Activated T-helper 1 cell treated with anti-CD3 and anti-CD28 coated beads, Interleukin-12 subunit alpha, Interleukin-12 subunit beta, Interleukin-2, Interleukin-4 antibody, amounts not matched to agents 30 ng/mL and 10 ng/mL and 1 ng/mL, durations not matched to agents 14 hours and 24 hours and 36 hours (primary cell): ENCODE measurements at regions of chr6 and their contacts with region 1.

Region 1: DNA sequence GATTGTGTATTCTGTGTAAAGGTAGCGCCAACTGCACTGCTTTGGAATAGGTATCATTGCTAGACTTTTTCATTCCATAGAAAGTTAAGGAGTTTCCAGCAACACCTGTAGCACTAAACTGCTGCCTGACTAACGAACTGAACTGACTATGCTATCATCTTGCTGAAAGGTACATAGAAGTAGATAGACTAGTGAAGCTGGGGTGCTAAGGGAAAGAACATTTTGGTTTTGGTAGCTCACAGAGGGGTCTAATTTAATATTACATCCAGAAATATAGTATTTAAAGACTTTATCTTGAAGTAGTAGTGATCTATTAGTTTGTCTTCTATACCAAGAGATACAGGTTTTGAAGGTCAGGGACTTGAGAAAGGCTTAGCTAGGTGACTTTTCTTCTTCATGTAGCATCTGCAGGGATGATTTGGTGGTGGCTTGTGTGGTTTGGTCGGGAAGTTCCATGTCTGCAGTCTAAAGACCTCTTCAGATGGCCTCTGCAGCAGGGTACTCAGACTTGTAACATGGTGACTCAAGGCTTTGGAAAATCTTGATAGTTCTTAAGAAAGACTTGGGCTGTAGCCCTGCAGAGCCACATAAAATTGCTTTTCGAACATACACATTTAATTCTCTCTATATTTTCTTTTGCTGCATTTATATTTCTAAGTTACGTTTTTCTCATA is 10.2 kb downstream of the SENP6 start:
- DNase-seq: peak; percentile 22
- H3K4me3 Mint-ChIP-seq: peak overlapping the region; percentile 29
- H3K27ac Mint-ChIP-seq: peak overlapping the region; percentile 79
- H3K4me1 Mint-ChIP-seq: peaks cover 73% of the 10 kb centered on the region
- H3K27me3 Mint-ChIP-seq: no peaks in the 10 kb centered on the region

Region 2: DNA sequence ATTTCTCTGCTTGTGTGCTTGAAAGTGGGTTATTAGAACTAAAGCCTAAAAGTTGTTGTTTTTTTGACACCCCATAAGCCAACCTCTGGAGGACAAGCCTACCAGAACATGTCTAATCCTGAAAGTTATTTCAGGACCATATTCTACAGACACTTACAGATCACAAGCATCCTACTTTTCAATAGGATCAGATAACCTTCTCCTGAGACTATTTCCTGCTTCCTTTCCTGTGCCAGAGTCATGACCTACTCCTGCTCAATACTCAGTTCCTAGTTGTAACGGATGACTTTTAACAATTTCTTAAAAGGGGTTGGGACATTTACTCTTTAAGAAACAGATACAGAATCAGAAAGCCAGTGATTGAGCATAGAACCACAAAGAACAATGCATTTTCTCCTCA is 113.0 kb before region 1 on chr6:
- intact Hi-C with region 1: loop called (anchors 5 kb)
- DNase-seq: no peak
- H3K4me3 Mint-ChIP-seq: no peak overlapping the region
- H3K27ac Mint-ChIP-seq: no peak overlapping the region
- H3K4me1 Mint-ChIP-seq: peaks cover 29% of the 10 kb centered on the region
- H3K27me3 Mint-ChIP-seq: peaks cover 26% of the 10 kb centered on the region

Region 3: GRCh38 chr6:75601304-75602245 is 10.3 kb before region 1 on chr6 and contains the start of gene SENP6:
- intact Hi-C with region 1: loop called (anchors 1 kb)
- DNase-seq: peak; percentile 68
- H3K4me3 Mint-ChIP-seq: peak within 1 kb of the TSS; percentile 100
- H3K27ac Mint-ChIP-seq: peak within 1 kb of the TSS; percentile 99
- H3K4me1 Mint-ChIP-seq: peaks cover 49% of the 10 kb centered on the region
- H3K27me3 Mint-ChIP-seq: no peaks in the 10 kb centered on the region
- total RNA-seq, gene SENP6: 81.2 and 81.7 TPM in 2 replicates

Region 4: DNA sequence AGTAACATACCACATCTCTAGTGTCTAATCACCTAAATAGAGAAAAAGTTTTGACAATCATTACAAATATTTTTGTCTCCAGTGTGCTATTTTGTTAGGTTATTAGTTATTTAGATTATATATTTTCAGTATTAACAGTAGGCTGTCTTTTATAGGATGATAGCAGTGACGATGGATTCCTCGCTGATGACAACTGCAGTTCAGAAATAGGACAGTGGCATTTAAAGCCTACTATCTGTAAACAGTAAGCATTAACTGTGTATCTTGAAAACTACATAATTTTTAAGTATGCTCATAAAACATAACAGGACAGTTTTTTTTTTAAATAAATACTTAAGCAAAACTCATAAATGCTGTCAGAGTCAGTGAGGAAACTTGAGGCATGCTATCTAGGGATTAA is 99.3 kb after region 1 on chr6:
- intact Hi-C with region 1: loop called (anchors 5 kb)
- DNase-seq: no peak
- H3K4me3 Mint-ChIP-seq: no peak overlapping the region
- H3K27ac Mint-ChIP-seq: no peak overlapping the region
- H3K4me1 Mint-ChIP-seq: no peaks in the 10 kb centered on the region
- H3K27me3 Mint-ChIP-seq: no peaks in the 10 kb centered on the region

Region 5: DNA sequence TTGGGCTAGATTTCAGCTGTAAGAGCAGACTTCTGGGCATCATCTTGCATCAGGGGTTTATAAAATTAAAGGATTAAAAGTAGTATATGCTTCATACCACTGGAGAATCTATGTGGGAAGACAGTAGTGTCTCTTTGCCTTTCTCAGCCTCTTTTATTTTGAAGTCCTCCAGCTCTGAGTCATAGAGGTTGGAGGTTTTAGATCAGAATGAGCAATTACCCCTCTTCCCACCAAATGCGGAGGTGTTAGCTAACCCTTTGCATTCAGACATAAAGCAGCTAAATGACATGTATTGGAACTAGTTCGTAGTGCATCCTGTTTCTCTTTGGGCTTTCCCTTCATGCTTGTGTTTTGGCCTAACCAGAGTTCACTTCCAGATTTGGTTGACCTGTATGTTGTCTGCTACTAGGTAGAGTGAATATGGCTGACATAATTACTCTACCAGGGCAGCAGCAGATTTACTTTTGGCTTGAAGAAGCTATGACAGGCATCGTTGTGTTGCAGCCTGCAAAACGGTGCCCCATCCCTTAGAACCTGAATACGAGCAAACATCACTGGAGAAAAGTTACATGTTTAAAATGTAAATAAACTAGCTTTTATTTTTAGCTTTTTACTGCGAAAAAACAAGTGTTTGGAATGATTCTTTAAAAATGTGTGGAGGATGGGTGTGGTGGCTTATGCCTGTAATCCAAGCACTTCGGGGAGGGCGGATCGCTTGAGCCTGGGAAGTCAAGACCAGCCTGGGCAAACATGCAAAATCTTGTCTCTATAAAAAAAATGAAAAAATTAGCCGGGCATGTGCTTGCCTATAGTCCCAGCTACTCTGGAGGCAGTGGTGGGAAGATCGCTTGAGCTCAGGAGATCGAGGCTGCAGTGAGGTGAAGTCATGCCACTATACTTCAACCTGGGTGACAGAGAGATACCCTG is 219.4 kb after region 1 on chr6:
- intact Hi-C with region 1: loop called (anchors 5 kb)
- DNase-seq: peak; percentile 4
- H3K4me3 Mint-ChIP-seq: no peak overlapping the region
- H3K27ac Mint-ChIP-seq: no peak overlapping the region
- H3K4me1 Mint-ChIP-seq: peaks cover 9% of the 10 kb centered on the region
- H3K27me3 Mint-ChIP-seq: peaks cover 3% of the 10 kb centered on the region